Endothelial cell of umbilical vein (primary cell): ENCODE measurements at regions of chr13 and their contacts with region 1.

Region 1: DNA sequence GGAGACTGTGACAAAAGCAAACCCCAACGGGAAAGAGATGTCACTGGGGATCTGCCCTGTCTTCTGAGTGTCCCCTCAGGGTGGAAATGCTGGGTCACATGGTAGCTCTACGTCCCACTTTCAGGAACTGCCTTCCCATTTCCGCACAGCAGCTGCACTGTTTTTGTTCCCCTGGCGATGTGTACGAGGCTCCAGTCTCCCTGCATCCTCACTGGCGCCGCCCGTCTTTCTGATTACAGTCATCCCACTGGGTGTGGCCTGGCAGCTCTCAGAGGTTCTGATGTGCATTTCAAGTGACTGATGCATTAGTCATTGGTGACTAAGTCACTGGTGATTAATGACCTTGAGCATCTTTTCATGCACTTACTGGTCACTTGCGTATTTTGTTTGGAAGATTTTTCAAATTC is 21.2 kb downstream of the PCID2 start:
- DNase-seq: peak; percentile 96
- H3K4me3 ChIP-seq: peak overlapping the region in 1 of 3 experiments; percentile 29
- H3K27ac ChIP-seq: peak overlapping the region; percentile 89
- H3K4me1 ChIP-seq: peaks cover 49% of the 10 kb centered on the region
- H3K27me3 ChIP-seq: no peaks in the 10 kb centered on the region
- CTCF ChIP-seq: no peak
- POLR2A ChIP-seq: peak; percentile 73

Region 2: DNA sequence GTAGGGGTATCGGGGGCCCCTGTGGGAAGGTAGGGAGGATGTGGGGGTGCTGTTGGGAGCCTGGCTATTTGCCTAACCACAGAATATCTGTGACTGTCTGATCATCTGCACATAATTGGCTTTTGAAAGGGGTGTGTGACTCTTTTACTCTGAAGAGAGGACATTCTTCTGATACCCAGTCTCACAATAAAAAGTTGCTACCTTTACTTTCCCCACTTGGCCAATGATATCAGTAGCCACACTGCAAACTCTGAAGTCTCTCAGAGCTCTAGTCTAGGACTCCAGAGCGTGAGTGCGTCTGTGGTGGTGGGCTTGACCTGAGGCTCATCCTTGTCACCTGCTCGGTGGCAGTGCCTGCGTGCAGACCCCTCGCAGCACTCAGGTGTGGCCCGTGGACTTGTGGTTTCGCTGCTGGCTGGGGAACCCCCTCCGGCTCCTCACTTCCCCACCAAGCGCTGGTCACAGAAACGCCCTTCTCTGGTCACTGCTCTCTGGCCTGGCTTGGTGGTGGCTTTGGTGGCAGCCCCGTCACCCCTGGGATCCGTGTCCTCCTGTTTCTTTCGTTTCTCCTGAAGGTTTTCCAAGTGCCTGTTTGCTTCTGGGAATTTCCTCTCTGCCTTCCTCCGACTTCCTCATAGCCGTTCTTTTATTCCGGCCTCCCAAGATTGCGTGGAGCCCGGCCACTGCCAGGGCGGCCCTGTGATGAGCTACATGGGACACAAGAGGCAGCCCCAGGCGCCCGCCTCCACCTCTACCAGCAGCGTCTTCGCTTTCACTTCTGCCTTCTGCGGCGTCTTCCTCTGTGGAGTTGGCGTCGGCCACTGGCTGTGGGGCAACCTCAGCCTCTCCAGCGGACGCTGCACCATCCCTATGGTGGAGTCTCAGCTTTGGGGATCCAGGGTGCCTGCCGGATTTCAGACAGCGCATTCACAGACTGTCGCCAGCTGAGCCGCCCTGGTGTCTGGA is 419.5 kb before region 1 on chr13:
- CTCF ChIA-PET with region 1: no interaction called
- POLR2A ChIA-PET with region 1: no interaction called
- dilution Hi-C with region 1: no loop called
- intact Hi-C with region 1: no loop called
- DNase-seq: no peak
- H3K4me3 ChIP-seq: no peak overlapping the region
- H3K27ac ChIP-seq: no peak overlapping the region
- H3K4me1 ChIP-seq: no peaks in the 10 kb centered on the region
- H3K27me3 ChIP-seq: no peaks in the 10 kb centered on the region
- CTCF ChIP-seq: no peak
- POLR2A ChIP-seq: no peak

Region 3: GRCh38 chr13:113153810-113154748 is 33.2 kb before region 1 on chr13:
- CTCF ChIA-PET with region 1: interaction called, 3 read pairs
- POLR2A ChIA-PET with region 1: no interaction called
- dilution Hi-C with region 1: no loop called
- intact Hi-C with region 1: loop called (anchors 1 kb)
- DNase-seq: peak; percentile 62
- H3K4me3 ChIP-seq: peak overlapping the region in 2 of 3 experiments; percentile 22 to 41
- H3K27ac ChIP-seq: no peak overlapping the region
- H3K4me1 ChIP-seq: peaks cover 6% of the 10 kb centered on the region
- H3K27me3 ChIP-seq: peaks cover 2 to 9% of the 10 kb centered on the region in 2 experiments
- CTCF ChIP-seq: no peak
- POLR2A ChIP-seq: peak; percentile 90

Region 4: GRCh38 chr13:113169277-113170272 is 17.7 kb before region 1 on chr13:
- CTCF ChIA-PET with region 1: no interaction called
- POLR2A ChIA-PET with region 1: no interaction called
- dilution Hi-C with region 1: no loop called
- intact Hi-C with region 1: loop called (anchors 1 kb)
- DNase-seq: no peak
- H3K4me3 ChIP-seq: no peak overlapping the region
- H3K27ac ChIP-seq: peak overlapping the region; percentile 27
- H3K4me1 ChIP-seq: peaks cover 24% of the 10 kb centered on the region
- H3K27me3 ChIP-seq: no peaks in the 10 kb centered on the region
- CTCF ChIP-seq: no peak
- POLR2A ChIP-seq: no peak

Region 5: GRCh38 chr13:113458253-113459065 is 271.2 kb after region 1 on chr13:
- CTCF ChIA-PET with region 1: no interaction called
- POLR2A ChIA-PET with region 1: no interaction called
- dilution Hi-C with region 1: no loop called
- intact Hi-C with region 1: no loop called
- DNase-seq: no peak
- H3K4me3 ChIP-seq: no peak overlapping the region
- H3K27ac ChIP-seq: no peak overlapping the region
- H3K4me1 ChIP-seq: no peaks in the 10 kb centered on the region
- H3K27me3 ChIP-seq: no peaks in the 10 kb centered on the region
- CTCF ChIP-seq: peak; percentile 36 to 64
- POLR2A ChIP-seq: no peak

Region 6: DNA sequence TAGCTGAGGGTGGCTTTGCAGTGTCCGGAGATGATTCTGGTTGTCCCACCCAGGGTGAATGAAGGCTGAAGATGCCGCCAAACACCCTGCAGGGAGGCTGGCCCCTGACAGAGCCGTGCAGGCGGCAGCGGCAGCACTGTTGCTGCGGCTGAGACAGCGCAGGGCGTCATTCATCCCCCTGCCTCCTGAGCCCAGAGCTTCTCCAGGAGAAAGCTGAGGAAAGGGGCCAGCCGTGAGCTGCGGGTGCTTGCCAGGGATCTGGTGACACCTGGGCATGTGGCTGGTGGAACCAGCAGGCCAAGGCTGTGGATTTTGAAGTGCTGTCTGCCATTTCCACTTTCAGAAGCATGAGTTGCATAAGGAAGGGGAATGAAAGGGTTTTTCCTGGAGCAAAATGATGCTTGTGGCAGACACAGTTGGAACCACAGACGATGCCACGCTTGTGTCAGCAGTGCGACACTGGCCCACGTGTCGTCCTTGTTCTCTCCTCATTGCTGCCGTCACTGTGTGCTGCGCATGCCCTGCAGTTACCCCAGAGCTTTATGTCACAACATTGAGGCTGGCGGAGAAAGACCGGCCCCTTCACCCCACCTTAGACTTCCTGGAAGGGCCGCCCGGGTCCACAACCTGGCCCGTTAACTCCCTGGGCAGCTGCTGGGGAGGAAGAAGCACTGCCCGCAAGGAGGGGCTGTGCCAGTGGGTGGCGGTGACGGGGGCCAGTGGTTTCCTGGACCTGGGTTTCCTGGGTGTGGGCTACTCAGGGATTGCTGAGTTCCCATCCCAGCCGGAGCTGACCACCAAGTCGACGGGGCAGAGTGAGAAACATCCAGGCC is 420.0 kb after region 1 on chr13:
- CTCF ChIA-PET with region 1: no interaction called
- POLR2A ChIA-PET with region 1: no interaction called
- dilution Hi-C with region 1: no loop called
- intact Hi-C with region 1: no loop called
- DNase-seq: no peak
- H3K4me3 ChIP-seq: no peak overlapping the region
- H3K27ac ChIP-seq: no peak overlapping the region
- H3K4me1 ChIP-seq: no peaks in the 10 kb centered on the region
- H3K27me3 ChIP-seq: no peaks in the 10 kb centered on the region
- CTCF ChIP-seq: no peak
- POLR2A ChIP-seq: no peak